WTC11 (cell line): ENCODE measurements at regions of chr11 and their contacts with region 1.

Region 1: GRCh38 chr11:22901603-22902002 is 41.3 kb upstream of the CCDC179 start:
- DNase-seq: no peak
- ATAC-seq: no peak
- H3K4me3 Mint-ChIP-seq: no peak overlapping the region
- H3K27ac Mint-ChIP-seq: no peak overlapping the region
- H3K4me1 Mint-ChIP-seq: peaks cover 4% of the 10 kb centered on the region
- H3K27me3 Mint-ChIP-seq: no peaks in the 10 kb centered on the region
- CTCF ChIP-seq: no peak

Region 2: DNA sequence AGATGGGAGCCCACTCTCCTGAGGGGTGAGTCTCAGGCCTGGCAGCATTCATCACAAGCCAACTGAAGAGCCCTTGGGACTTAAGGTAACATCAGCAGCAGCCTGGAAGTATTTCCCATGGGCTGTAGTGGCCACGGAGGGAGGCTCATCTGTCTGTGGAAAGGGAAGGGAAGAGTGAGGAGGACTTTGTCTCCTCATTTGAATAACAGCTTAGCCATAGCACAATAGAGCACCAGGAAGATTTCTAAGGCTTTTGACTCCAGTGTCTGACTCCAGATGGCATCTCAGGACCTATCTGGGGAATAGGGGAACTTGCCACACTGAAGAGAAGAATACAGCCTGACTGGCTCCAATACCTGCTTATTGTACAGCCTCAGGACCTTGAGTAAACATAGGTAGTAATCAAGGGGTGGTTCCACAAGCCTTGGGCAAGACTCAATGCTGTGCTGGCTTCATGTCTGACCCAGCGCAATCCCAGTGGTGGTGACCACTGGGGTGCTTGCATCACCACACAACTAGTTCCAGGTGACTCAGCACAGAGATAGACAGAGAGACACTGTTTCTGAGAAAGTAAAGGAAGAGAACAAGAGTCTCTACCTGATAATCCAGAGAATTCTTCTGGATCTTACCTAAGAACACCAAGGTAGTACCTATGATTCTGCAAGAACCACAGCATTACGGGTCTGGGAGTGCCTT is 469.1 kb after region 1 on chr11:
- CTCF ChIA-PET with region 1: no interaction called
- POLR2A ChIA-PET with region 1: interaction called, 10 read pairs
- DNase-seq: no peak
- ATAC-seq: no peak
- H3K4me3 Mint-ChIP-seq: no peak overlapping the region
- H3K27ac Mint-ChIP-seq: no peak overlapping the region
- H3K4me1 Mint-ChIP-seq: peaks cover 2% of the 10 kb centered on the region
- H3K27me3 Mint-ChIP-seq: no peaks in the 10 kb centered on the region
- CTCF ChIP-seq: no peak